ENCODE measurements at regions of chr4 and their contacts with region 1.

Region 1: DNA sequence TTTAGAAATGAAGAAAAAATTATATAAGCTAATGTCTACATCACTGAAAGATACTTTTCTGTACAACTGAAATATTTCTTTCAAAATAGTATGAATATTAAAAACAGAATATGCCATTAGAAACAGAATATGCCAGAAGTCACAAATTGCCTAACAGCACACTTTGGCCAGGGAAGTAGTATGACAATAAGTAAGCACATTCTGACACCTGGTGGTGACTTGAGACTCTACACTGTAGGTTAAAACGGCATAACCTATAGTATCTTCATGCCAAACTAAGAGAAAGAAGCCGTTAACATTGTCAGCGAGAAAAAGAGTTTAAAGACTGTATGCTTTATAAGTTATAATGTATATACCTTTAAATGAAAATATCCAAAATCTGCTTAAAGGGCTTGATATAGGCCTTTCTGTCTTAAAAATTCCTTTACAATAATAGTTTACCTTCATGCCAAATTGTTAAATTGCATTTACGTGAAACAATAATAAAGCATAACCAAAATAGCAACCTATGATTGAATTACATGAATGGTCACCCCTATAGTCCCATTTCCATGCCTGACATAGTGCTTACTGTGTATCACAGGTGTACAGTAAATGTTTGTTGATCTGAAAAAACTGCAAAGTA is 32.8 kb downstream of the FAM13A start:
- DNase-seq: peak; percentile 15 to 60
- H3K4me3 ChIP-seq: no peak overlapping the region
- H3K27ac ChIP-seq: no peak overlapping the region
- H3K4me1 ChIP-seq: 0 out of 2 replicates have a peak, but pooled peaks cover 5% of the 10 kb centered on the region
- H3K27me3 ChIP-seq: no peaks in the 10 kb centered on the region
- CTCF ChIP-seq: peak; percentile 81

Region 2: DNA sequence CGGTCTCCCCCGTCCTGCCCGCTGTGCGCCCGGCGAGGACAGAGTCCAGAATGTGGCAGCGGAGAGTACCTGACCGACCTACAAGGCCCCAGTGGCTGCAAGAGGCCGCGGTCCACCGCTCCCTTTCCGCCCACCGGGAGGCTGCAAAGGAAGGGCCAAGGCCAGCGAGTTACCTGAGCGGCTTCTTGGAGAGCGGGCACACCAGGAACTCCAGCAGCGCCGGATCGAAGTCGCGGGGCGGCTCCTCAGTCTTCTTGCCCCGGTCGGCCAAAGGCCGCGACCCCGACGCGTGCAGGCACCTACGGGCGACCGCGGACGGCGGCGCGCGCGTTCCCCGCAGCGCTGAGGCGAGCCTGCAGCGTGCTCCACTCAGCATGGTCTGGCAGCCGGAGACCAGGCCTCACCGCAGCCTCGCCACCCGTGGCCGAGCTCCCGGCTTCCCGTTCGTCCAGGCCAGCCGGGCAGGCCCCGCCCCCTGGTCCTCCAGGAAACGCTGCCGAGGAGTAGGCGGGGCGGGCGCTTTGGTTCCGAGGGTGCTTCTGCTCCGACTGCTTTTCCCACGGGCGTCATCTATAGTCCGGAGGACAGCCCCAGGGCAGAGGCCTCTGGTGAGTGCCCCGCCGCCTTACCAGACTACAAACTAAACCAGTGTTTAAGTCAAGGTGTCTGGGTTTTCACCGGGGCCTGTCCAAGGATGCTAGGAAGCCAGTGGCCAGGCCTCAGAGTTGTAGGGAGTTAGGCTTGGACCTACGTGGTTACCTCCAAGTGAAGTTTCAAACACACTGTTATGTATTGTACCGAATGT is 500.6 kb before region 1 on chr4 and contains the start of gene PYURF:
- CTCF ChIA-PET with region 1: no interaction called
- POLR2A ChIA-PET with region 1: no interaction called
- intact Hi-C with region 1: loop called (anchors 5 kb)
- DNase-seq: peak; percentile 80 to 87
- H3K4me3 ChIP-seq: peak within 1 kb of the TSS; percentile 85
- H3K27ac ChIP-seq: peak within 1 kb of the TSS; percentile 73
- H3K4me1 ChIP-seq: peaks cover 26% of the 10 kb centered on the region
- H3K27me3 ChIP-seq: no peaks in the 10 kb centered on the region
- CTCF ChIP-seq: no peak
- total RNA-seq, gene PYURF: 53.3 and 55.0 TPM in 2 replicates

Region 3: DNA sequence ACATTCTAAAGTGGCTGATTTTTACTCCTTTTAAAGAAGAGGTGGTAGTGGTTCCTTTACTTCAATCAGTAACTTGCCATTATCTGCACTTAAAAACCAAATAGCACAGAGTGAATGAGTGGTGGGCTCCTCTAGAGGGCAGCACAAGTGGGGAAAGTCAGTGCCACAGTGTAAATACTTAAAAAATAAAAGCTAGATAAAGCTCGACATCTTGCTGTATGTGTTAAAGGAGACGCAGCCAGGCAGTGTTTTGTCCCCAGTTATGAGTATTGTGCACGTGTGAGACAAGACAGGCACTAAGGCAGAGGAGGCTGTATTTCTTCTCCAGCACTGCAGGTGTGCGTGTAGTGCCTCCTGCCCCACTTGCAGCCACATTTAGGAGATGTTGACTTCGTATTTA is 351.2 kb before region 1 on chr4:
- CTCF ChIA-PET with region 1: interaction called, 5 read pairs
- POLR2A ChIA-PET with region 1: no interaction called
- intact Hi-C with region 1: loop called (anchors 10 kb)
- DNase-seq: no peak
- H3K4me3 ChIP-seq: no peak overlapping the region
- H3K27ac ChIP-seq: no peak overlapping the region
- H3K4me1 ChIP-seq: no peaks in the 10 kb centered on the region
- H3K27me3 ChIP-seq: no peaks in the 10 kb centered on the region
- CTCF ChIP-seq: peak; percentile 55

Region 4: DNA sequence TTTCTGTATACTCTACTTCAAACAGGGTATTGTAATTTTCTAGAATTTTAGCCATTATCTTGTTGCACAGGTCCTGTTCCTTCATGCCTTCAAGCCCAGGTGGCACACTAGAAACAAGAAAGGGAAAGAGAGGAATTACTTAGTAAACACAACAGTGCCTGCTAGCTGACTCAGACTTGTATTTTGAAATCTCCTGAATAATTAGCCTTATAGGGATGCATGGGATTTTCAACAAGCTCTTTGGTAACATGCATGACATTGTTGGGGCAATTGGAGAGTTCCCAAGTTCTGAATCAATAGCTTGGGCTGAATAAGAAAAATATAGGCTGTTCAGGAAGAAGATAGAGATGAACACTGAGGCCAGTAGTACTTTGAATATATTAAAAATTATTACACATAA is 86.0 kb before region 1 on chr4:
- CTCF ChIA-PET with region 1: no interaction called
- POLR2A ChIA-PET with region 1: no interaction called
- intact Hi-C with region 1: loop called (anchors 5 kb)
- DNase-seq: peak; percentile 7 to 87
- H3K4me3 ChIP-seq: no peak overlapping the region
- H3K27ac ChIP-seq: peak overlapping the region; percentile 52
- H3K4me1 ChIP-seq: peaks cover 23% of the 10 kb centered on the region
- H3K27me3 ChIP-seq: no peaks in the 10 kb centered on the region
- CTCF ChIP-seq: no peak

Measured in PC-9 (cell line).